ENCODE measurements at regions of chr16 and their contacts with region 1.

Region 1: GRCh38 chr16:80656711-80657150 is 115.9 kb downstream of the DYNLRB2 start:
- DNase-seq: no peak
- ATAC-seq: no peak
- H3K4me3 ChIP-seq: no peak overlapping the region
- H3K27ac ChIP-seq: no peak overlapping the region
- H3K4me1 ChIP-seq: no peaks in the 10 kb centered on the region
- H3K27me3 ChIP-seq: no peaks in the 10 kb centered on the region
- CTCF ChIP-seq: no peak
- POLR2A ChIP-seq: no peak

Region 2: GRCh38 chr16:80751190-80751589 is 94.5 kb after region 1 on chr16:
- in situ Hi-C with region 1: loop called in 1 of 4 experiments (anchors 25 kb)
- intact Hi-C with region 1: no loop called
- DNase-seq: no peak
- ATAC-seq: no peak
- H3K4me3 ChIP-seq: no peak overlapping the region
- H3K27ac ChIP-seq: no peak overlapping the region
- H3K4me1 ChIP-seq: no peaks in the 10 kb centered on the region
- H3K27me3 ChIP-seq: no peaks in the 10 kb centered on the region
- CTCF ChIP-seq: no peak
- POLR2A ChIP-seq: no peak

Measured in gastrocnemius medialis (tissue), 4 donors.